Keratinocyte (primary cell): ENCODE measurements at regions of chr19 and their contacts with region 1.

Region 1: DNA sequence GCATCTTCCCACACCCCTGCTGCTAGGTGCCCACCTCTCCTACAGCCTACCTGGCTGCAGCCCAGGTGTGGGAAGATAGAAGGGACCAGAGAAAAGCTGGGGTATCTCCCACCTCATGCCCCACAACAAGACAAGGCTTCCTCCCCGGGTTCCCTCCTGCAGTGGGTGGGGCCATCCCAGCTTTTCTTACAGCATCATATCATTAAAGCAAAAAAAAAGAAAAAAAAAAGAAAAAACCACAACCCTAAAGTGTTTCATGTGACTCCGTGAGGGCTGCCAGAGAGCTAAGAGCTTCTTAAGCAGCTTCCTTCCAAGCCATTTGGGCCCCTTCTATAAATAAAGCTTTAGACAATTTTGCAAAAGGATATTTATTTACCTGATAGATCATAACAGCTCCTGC is 455.4 kb upstream of the TSHZ3 start:
- DNase-seq: no peak
- H3K4me3 ChIP-seq: no peak overlapping the region
- H3K27ac ChIP-seq: no peak overlapping the region
- H3K4me1 ChIP-seq: no peaks in the 10 kb centered on the region
- H3K27me3 ChIP-seq: no peaks in the 10 kb centered on the region
- CTCF ChIP-seq: no peak

Region 2: GRCh38 chr19:31570718-31571117 is 233.9 kb before region 1 on chr19:
- dilution Hi-C with region 1: no loop called
- DNase-seq: no peak
- H3K4me3 ChIP-seq: no peak overlapping the region
- H3K27ac ChIP-seq: no peak overlapping the region
- H3K4me1 ChIP-seq: no peaks in the 10 kb centered on the region
- H3K27me3 ChIP-seq: no peaks in the 10 kb centered on the region
- CTCF ChIP-seq: no peak

Region 3: DNA sequence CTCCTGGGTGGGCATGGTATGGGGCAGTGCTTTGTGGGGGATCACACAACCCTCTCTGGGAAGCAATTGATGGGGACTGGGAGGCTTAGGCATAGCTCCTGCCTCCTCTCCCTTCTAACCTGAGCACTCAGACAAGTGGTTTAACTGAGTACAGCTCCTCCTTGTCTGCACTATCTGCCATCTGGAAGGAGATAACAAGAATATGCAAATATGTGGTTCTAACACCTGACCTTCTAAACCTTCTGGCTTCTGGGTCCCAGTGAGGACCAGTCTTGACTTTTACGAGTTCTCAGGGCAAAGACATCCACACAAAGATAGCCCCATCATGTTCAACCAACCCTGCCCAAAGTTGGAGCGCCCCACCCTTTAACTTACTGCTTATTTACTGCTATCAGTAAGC is 74.4 kb before region 1 on chr19:
- dilution Hi-C with region 1: loop called (anchors 10 kb)
- DNase-seq: no peak
- H3K4me3 ChIP-seq: no peak overlapping the region
- H3K27ac ChIP-seq: no peak overlapping the region
- H3K4me1 ChIP-seq: no peaks in the 10 kb centered on the region
- H3K27me3 ChIP-seq: no peaks in the 10 kb centered on the region
- CTCF ChIP-seq: no peak

Region 4: GRCh38 chr19:31749231-31749630 is 55.4 kb before region 1 on chr19:
- dilution Hi-C with region 1: loop called (anchors 5 kb)
- DNase-seq: no peak
- H3K4me3 ChIP-seq: no peak overlapping the region
- H3K27ac ChIP-seq: no peak overlapping the region
- H3K4me1 ChIP-seq: no peaks in the 10 kb centered on the region
- H3K27me3 ChIP-seq: no peaks in the 10 kb centered on the region
- CTCF ChIP-seq: no peak

Region 5: GRCh38 chr19:31863122-31863521 is 58.5 kb after region 1 on chr19:
- dilution Hi-C with region 1: loop called (anchors 5 kb)
- DNase-seq: no peak
- H3K4me3 ChIP-seq: no peak overlapping the region
- H3K27ac ChIP-seq: no peak overlapping the region
- H3K4me1 ChIP-seq: no peaks in the 10 kb centered on the region
- H3K27me3 ChIP-seq: no peaks in the 10 kb centered on the region
- CTCF ChIP-seq: no peak